ENCODE measurements at regions of chr21 and their contacts with region 1.

Region 1: GRCh38 chr21:34603002-34603709 is 11.8 kb downstream of the RCAN1 start:
- DNase-seq: peak; percentile 66 to 89
- H3K4me3 ChIP-seq: no peak overlapping the region
- H3K27ac ChIP-seq: no peak overlapping the region
- H3K4me1 ChIP-seq: no peaks in the 10 kb centered on the region; a peak in 1 of 7 replicates
- H3K27me3 ChIP-seq: no peaks in the 10 kb centered on the region
- CTCF ChIP-seq: peak; percentile 81 to 87 (median 83)
- EP300 ChIP-seq: no peak
- POLR2A ChIP-seq: no peak
- RAD21 ChIP-seq: peak; percentile 88

Region 2: GRCh38 chr21:34510148-34511142 is 92.7 kb before region 1 on chr21:
- CTCF ChIA-PET with region 1: interaction called, 131 read pairs
- POLR2A ChIA-PET with region 1: no interaction called
- DNase-seq: peak; percentile 61 to 88
- H3K4me3 ChIP-seq: no peak overlapping the region
- H3K27ac ChIP-seq: no peak overlapping the region
- H3K4me1 ChIP-seq: no peaks in the 10 kb centered on the region
- H3K27me3 ChIP-seq: no peaks in the 10 kb centered on the region
- CTCF ChIP-seq: peak; percentile 92 to 98 (median 96)
- EP300 ChIP-seq: no peak
- POLR2A ChIP-seq: no peak
- RAD21 ChIP-seq: peak; percentile 95 to 98

Region 3: GRCh38 chr21:34526618-34527290 is 76.4 kb before region 1 on chr21:
- CTCF ChIA-PET with region 1: interaction called, 14 read pairs
- POLR2A ChIA-PET with region 1: interaction called, 3 read pairs
- DNase-seq: no peak
- H3K4me3 ChIP-seq: no peak overlapping the region
- H3K27ac ChIP-seq: no peak overlapping the region
- H3K4me1 ChIP-seq: peaks cover 8 to 19% (median 14%) of the 10 kb centered on the region in 4 experiments
- H3K27me3 ChIP-seq: no peaks in the 10 kb centered on the region; a peak in 2 of 7 replicates
- CTCF ChIP-seq: no peak
- EP300 ChIP-seq: no peak
- POLR2A ChIP-seq: no peak
- RAD21 ChIP-seq: no peak

Region 4: GRCh38 chr21:34582506-34583150 is 20.5 kb before region 1 on chr21:
- CTCF ChIA-PET with region 1: interaction called, 34 read pairs
- POLR2A ChIA-PET with region 1: no interaction called
- DNase-seq: no peak
- H3K4me3 ChIP-seq: no peak overlapping the region
- H3K27ac ChIP-seq: no peak overlapping the region
- H3K4me1 ChIP-seq: no peaks in the 10 kb centered on the region
- H3K27me3 ChIP-seq: no peaks in the 10 kb centered on the region
- CTCF ChIP-seq: peak in 2 of 3 experiments; percentile 61 to 68; a peak in 3 of 4 replicates
- EP300 ChIP-seq: no peak
- POLR2A ChIP-seq: no peak
- RAD21 ChIP-seq: peak; percentile 77 to 81

Region 5: GRCh38 chr21:34614633-34615486 is 11.7 kb after region 1 on chr21 and contains the start of gene RCAN1:
- CTCF ChIA-PET with region 1: interaction called, 32 read pairs
- POLR2A ChIA-PET with region 1: no interaction called
- DNase-seq: peak; percentile 67 to 79
- H3K4me3 ChIP-seq: peak within 1 kb of the TSS; percentile 43 to 69 (median 54)
- H3K27ac ChIP-seq: no peak within 1 kb of the TSS
- H3K4me1 ChIP-seq: peaks cover 0 to 6% (median 2%) of the 10 kb centered on the region in 4 experiments; a peak in 3 of 7 replicates
- H3K27me3 ChIP-seq: peaks cover 7 to 23% (median 16%) of the 10 kb centered on the region in 4 experiments
- CTCF ChIP-seq: no peak
- EP300 ChIP-seq: no peak
- POLR2A ChIP-seq: no peak
- RAD21 ChIP-seq: no peak
- total RNA-seq, gene RCAN1: 5.5 and 6.4 TPM in 2 replicates

Region 6: DNA sequence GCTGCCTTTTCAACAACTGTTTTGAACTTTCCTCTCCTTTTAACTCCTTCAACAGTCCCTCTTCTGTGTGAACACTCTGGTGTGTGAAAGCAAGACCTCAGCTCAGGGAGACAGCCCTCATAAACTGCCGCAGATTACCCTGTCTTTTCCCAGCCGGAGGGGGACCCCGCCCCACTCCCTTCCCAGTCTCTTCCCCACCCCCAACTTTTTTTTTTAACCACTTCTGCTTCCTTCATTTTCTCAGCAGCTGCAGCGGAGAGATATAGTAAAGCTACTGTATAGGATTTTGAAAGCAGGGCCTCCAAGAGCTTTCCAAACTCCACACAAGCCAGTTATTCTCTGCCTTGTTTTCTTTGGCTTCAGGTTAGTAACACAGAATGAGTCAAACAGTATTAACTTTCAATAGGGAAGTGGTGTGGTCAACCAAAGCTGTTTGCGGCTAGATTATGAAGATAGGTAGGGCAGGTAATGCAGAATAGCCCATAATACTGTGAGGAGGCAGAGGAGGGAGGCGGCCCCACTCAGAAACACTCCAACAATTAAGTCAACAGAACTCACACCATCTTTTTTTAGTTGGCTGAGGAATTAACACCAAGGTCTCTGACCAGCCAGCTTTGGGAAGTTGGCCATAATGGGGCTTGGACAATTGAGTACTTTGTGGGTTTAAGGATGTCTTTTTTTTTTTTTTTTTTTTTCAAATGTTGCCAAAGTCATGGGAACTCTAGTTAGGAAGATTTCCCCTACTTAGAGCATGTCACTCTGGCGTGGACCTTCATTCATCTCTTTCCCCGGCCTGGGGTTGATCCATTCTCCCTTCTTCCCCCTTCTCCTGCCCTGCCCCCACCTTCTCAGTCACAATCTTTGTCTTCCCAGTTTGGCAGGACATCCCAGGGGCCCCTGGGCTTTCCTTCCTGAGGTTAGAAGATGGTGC is 242.6 kb after region 1 on chr21:
- CTCF ChIA-PET with region 1: no interaction called
- POLR2A ChIA-PET with region 1: no interaction called
- DNase-seq: no peak
- H3K4me3 ChIP-seq: no peak overlapping the region
- H3K27ac ChIP-seq: no peak overlapping the region
- H3K4me1 ChIP-seq: peaks cover 7 to 23% (median 15%) of the 10 kb centered on the region in 4 experiments
- H3K27me3 ChIP-seq: no peaks in the 10 kb centered on the region; a peak in 3 of 7 replicates
- CTCF ChIP-seq: no peak
- EP300 ChIP-seq: no peak
- POLR2A ChIP-seq: no peak
- RAD21 ChIP-seq: no peak

Region 7: GRCh38 chr21:34874684-34875513 is 271.7 kb after region 1 on chr21:
- CTCF ChIA-PET with region 1: no interaction called
- POLR2A ChIA-PET with region 1: no interaction called
- DNase-seq: no peak
- H3K4me3 ChIP-seq: no peak overlapping the region
- H3K27ac ChIP-seq: no peak overlapping the region
- H3K4me1 ChIP-seq: no peaks in the 10 kb centered on the region
- H3K27me3 ChIP-seq: peaks cover 0 to 5% (median 0%) of the 10 kb centered on the region in 4 experiments; a peak in 3 of 7 replicates
- CTCF ChIP-seq: no peak
- EP300 ChIP-seq: no peak
- POLR2A ChIP-seq: no peak
- RAD21 ChIP-seq: no peak

Measured in H1 (cell line).